ENCODE measurements at regions of chr7 and their contacts with region 1.

Region 1: DNA sequence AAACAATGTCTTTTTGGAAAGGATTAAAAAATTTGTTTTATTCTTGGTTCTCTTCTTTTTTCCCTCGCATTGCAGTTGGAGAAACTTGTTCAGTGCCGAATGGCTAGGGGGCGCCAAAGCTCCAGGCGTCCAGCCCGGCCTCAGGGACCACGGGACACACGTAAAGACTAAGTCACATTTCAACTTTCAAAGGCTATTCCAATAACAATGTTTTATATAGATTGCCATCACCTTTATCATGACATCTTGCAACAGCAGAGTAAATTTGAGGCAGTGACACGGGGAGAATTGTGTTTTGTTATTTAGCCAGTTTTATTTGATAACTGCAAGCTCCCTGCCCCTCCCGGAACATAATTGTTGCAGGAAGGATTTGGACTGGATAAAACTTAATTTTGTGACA is 2.2 kb upstream of the IGFBP3 start:
- H3K4me3 ChIP-seq: no peak overlapping the region
- H3K27ac ChIP-seq: no peak overlapping the region
- H3K4me1 ChIP-seq: peaks cover 3% of the 10 kb centered on the region; the same call in 1 of the 2 replicates
- CTCF ChIP-seq: peak; percentile 41; the same call in 1 of the 2 replicates

Region 2: GRCh38 chr7:45292481-45292880 is 630.8 kb before region 1 on chr7:
- CTCF ChIA-PET with region 1: no interaction called
- POLR2A ChIA-PET with region 1: no interaction called
- H3K4me3 ChIP-seq: no peak overlapping the region
- H3K27ac ChIP-seq: no peak overlapping the region
- H3K4me1 ChIP-seq: peaks cover 2% of the 10 kb centered on the region; the same call in 1 of the 2 replicates
- CTCF ChIP-seq: no peak

Region 3: GRCh38 chr7:45689011-45689796 is 234.1 kb before region 1 on chr7:
- CTCF ChIA-PET with region 1: no interaction called
- POLR2A ChIA-PET with region 1: no interaction called
- H3K4me3 ChIP-seq: no peak overlapping the region
- H3K27ac ChIP-seq: no peak overlapping the region
- H3K4me1 ChIP-seq: no peaks in the 10 kb centered on the region
- CTCF ChIP-seq: no peak

Region 4: GRCh38 chr7:45890902-45891461 is 32.3 kb before region 1 on chr7:
- CTCF ChIA-PET with region 1: interaction called, 15 read pairs
- POLR2A ChIA-PET with region 1: no interaction called
- H3K4me3 ChIP-seq: no peak overlapping the region
- H3K27ac ChIP-seq: no peak overlapping the region
- H3K4me1 ChIP-seq: no peaks in the 10 kb centered on the region
- CTCF ChIP-seq: no peak

Region 5: DNA sequence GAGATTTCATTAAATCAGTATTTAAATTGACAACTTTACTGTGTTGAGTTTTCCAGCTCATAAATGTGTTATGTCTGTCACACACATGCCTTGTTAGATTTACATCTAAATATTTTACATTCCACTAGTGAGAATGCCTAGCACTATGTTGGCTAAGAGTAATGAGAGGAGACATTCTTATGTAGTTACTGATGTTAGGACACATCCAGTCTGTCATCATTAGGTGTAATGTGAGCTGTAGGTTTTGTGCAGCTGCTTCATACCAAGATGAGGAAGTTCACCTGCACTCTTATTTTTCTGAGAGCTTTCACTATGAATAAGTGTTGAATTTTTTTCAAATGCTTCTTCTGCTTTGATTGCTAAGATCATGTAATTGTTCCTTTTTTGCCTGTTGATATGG is 215.8 kb after region 1 on chr7:
- CTCF ChIA-PET with region 1: interaction called, 15 read pairs
- POLR2A ChIA-PET with region 1: no interaction called
- H3K4me3 ChIP-seq: no peak overlapping the region
- H3K27ac ChIP-seq: no peak overlapping the region
- H3K4me1 ChIP-seq: no peaks in the 10 kb centered on the region
- CTCF ChIP-seq: no peak

Region 6: GRCh38 chr7:46352004-46352954 is 429.0 kb after region 1 on chr7:
- CTCF ChIA-PET with region 1: interaction called, 26 read pairs
- POLR2A ChIA-PET with region 1: no interaction called
- H3K4me3 ChIP-seq: no peak overlapping the region
- H3K27ac ChIP-seq: no peak overlapping the region
- H3K4me1 ChIP-seq: no peaks in the 10 kb centered on the region
- CTCF ChIP-seq: 0 out of 2 replicates have a peak, but pooled peaks have one; percentile 29

Region 7: DNA sequence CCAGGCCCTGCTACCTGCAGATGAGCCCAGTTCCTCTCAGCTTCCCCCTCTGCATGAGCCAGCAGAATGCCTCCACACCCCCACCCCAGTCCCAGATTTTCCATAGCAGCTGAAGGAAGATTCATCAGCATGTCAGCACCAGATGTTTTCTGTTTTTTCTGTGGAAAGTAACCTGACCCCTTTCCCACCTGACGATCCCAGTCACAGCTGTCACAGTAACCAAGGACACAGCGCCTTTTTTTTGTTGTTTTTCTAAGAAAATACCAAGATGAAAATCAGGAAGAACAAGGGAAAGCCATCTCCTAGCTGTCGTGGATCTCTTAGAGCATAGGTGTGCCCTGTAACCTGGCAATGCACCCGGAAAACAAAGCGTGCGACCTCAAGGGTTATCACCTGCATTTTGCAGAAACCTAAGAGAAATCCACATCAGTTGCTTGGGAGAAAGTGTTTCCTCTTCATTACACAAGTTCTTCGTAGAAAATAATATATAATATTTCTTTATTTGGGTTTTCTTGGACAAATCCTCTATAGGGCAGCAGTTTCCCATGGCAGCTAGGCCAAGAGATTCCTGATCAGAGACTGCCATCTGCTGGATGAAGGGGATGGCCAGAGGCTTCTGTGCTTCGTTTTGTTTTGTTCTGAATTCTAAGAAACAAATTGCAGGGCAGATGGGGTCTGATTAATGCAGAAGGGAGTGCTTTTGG is 1256.7 kb after region 1 on chr7:
- CTCF ChIA-PET with region 1: interaction called, 11 read pairs
- POLR2A ChIA-PET with region 1: no interaction called
- H3K4me3 ChIP-seq: no peak overlapping the region
- H3K27ac ChIP-seq: no peak overlapping the region
- H3K4me1 ChIP-seq: no peaks in the 10 kb centered on the region
- CTCF ChIP-seq: 0 out of 2 replicates have a peak, but pooled peaks have one; percentile 12

Measured in HEK293 (cell line).